Stomach (tissue), 19 donors: ENCODE measurements at regions of chr11 and their contacts with region 1.

Region 1: DNA sequence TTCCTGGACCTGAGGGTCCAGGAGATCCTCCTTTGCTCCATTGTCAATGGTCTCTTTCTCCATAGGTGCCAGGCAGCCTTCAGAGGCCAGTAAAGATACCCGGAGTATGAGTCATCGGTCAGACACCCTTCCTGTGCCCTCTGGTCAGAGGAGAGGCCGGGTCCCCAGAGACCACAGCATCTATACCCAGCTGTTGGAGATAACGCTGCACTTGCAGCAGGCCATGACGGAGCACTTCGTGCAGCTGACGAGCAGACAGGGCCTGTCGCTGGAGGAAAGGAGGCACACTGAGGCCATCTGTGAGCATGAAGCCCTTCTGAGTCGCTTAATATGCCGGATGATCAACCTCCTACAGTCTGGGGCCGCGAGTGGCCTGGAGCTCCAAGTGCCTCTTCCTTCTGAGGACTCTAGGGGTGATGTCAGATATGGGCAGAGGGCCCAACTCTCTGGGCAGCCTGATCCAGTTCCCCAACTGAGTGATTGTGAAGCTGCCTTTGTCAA is at the start of gene ACCSL:
- DNase-seq: no peak
- H3K4me3 ChIP-seq: no peak within 1 kb of the TSS
- H3K27ac ChIP-seq: no peak within 1 kb of the TSS
- H3K4me1 ChIP-seq: no peaks in the 10 kb centered on the region
- H3K27me3 ChIP-seq: no peaks in the 10 kb centered on the region
- CTCF ChIP-seq: no peak
- EP300 ChIP-seq: no peak
- POLR2A ChIP-seq: no peak
- total RNA-seq, gene ACCSL: not detected

Region 2: DNA sequence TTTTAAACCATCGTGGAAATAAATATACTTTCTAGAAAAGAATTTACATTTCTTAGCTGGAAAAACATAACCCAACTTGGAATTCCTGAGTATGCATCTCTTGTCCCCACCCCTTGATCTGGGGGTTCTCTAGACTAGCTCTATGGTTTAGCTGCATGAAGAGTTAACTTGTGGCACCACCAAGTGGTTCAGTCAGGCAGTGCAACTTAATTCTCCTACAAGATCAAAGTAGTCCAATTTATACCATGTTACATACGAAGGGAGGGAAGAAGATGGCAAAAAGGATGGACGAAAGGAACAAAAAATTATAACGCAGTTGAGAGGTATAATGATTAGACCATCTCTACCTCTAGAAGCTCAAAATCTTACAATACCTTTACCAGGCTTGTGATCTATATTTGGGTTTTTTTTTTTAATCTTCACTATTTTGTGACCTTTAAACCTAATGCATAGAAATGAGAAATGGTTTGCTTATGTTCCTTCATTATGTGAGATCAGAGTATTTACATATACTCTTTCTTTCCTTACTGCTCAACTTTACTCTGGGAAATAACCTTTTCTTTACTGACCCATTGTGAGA is 195.8 kb before region 1 on chr11:
- intact Hi-C with region 1: no loop called
- DNase-seq: peak; percentile 62 to 86
- H3K4me3 ChIP-seq: no peak overlapping the region
- H3K27ac ChIP-seq: no peak overlapping the region
- H3K4me1 ChIP-seq: no peaks in the 10 kb centered on the region
- H3K27me3 ChIP-seq: no peaks in the 10 kb centered on the region
- CTCF ChIP-seq: peak in 5 of 7 experiments; percentile 55 to 72 (median 65)
- EP300 ChIP-seq: no peak
- POLR2A ChIP-seq: no peak

Region 3: GRCh38 chr11:43880640-43881159 is 167.3 kb before region 1 on chr11 and contains the start of gene ALKBH3:
- intact Hi-C with region 1: loop called (anchors 10 kb)
- DNase-seq: peak; percentile 95 to 97
- H3K4me3 ChIP-seq: peak within 1 kb of the TSS; percentile 60 to 97 (median 81)
- H3K27ac ChIP-seq: peak within 1 kb of the TSS; percentile 23 to 80 (median 74)
- H3K4me1 ChIP-seq: peaks cover 14 to 26% (median 24%) of the 10 kb centered on the region in 4 donors
- H3K27me3 ChIP-seq: peaks cover 0 to 30% (median 12%) of the 10 kb centered on the region in 3 donors
- CTCF ChIP-seq: peak in 1 of 7 experiments; percentile 41
- EP300 ChIP-seq: no peak
- POLR2A ChIP-seq: no peak
- total RNA-seq, gene ALKBH3: 25.7 to 113 (median 37.4) TPM

Region 4: GRCh38 chr11:43894546-43894945 is 153.4 kb before region 1 on chr11:
- intact Hi-C with region 1: no loop called
- DNase-seq: no peak
- H3K4me3 ChIP-seq: no peak overlapping the region
- H3K27ac ChIP-seq: no peak overlapping the region
- H3K4me1 ChIP-seq: peaks cover 0 to 10% (median 2%) of the 10 kb centered on the region in 4 donors
- H3K27me3 ChIP-seq: no peaks in the 10 kb centered on the region
- CTCF ChIP-seq: no peak
- EP300 ChIP-seq: no peak
- POLR2A ChIP-seq: no peak

Region 5: DNA sequence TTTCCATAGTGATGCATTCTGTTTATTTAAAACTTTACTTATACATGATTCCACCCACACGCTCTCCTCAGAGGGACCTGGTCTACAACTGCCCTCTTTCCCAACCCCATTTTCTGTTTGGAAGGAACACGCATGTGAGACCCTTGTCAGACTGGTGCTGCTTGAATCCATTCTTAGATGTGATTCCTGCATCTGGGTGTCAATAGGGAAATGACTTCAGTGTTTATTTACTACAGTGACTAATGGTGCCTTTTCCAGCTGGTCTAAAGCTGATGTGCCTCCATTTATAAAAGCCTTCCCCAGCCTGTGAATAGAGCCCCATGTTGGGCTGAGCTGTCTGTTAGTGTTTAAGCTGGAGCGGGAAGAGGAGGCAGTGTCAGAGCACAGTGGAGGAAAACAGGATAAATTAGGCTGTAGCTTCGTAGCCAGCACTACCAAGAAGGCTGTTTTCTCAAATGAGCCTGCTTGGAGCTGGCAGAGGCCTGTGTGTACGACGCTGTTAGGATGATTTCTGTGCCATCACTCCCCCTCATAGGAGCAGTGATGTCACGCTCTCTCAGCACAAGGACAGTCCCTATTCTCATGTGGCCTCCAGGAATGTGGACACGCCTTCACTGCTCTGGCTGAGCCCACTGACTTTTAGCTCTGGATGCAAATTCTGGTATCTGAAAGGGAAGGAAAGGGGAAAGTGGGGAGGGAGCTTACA is 124.4 kb before region 1 on chr11:
- intact Hi-C with region 1: no loop called
- DNase-seq: peak in 1 of 2 donors; percentile 87
- H3K4me3 ChIP-seq: no peak overlapping the region
- H3K27ac ChIP-seq: peak overlapping the region; percentile 55 to 94 (median 88)
- H3K4me1 ChIP-seq: peaks cover 41 to 94% (median 67%) of the 10 kb centered on the region in 4 donors
- H3K27me3 ChIP-seq: no peaks in the 10 kb centered on the region
- CTCF ChIP-seq: no peak
- EP300 ChIP-seq: peak; percentile 62
- POLR2A ChIP-seq: no peak